ENCODE measurements at regions of chr6 and their contacts with region 1.

Region 1: DNA sequence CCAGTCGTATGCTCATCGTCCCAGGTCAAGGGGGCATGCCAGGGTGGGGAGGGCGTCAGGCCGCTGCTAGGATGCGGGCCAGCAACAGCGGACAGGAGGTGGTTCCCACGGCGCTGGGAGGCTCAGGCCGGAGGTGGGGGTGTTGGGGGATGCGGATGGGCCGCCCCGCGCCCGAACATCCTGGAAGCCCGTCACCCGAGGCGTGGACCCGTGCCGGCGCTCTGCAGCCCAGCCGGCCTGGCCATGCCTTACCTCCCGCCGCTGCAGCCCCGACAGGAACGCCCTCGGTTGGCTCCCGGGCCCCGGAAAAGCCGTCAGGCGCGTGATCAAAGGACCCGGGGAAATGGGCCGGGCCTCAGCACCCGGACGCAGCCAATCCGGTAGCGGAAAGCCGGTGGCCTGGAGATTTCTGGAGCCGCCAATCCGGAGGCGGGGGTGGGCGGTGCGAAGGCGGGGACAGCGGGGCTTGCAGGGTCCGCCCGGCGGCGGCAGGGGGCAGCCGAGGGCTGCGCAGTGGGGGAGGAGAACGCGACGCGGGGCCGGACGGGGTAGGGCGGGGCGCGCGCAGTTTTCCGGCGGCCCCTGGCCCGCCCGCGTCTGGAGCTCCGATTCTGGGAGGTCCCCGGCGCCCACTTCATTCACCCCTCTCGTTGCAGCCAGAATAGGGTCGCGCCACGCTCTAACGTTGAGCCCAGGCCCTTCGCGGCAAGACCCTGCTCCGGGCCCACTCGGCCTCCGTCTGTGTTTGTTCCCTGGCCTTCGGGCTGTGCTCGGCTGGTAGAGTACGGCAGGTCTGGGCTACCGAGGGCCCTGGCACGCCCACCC is at the start of gene SMIM29:
- DNase-seq: peak; percentile 99
- ATAC-seq: peak; percentile 83
- H3K4me3 Mint-ChIP-seq: peak within 1 kb of the TSS; percentile 76
- H3K27ac Mint-ChIP-seq: peak within 1 kb of the TSS; percentile 85
- H3K4me1 Mint-ChIP-seq: peaks cover 43% of the 10 kb centered on the region
- H3K27me3 Mint-ChIP-seq: no peaks in the 10 kb centered on the region
- total RNA-seq, gene SMIM29: 15.8 to 16.3 TPM

Region 2: GRCh38 chr6:34015586-34015985 is 233.4 kb before region 1 on chr6:
- CTCF ChIA-PET with region 1: no interaction called
- POLR2A ChIA-PET with region 1: no interaction called
- intact Hi-C with region 1: no loop called
- DNase-seq: no peak
- ATAC-seq: no peak
- H3K4me3 Mint-ChIP-seq: no peak overlapping the region
- H3K27ac Mint-ChIP-seq: no peak overlapping the region
- H3K4me1 Mint-ChIP-seq: no peaks in the 10 kb centered on the region
- H3K27me3 Mint-ChIP-seq: no peaks in the 10 kb centered on the region

Region 3: GRCh38 chr6:34161857-34162515 is 87.0 kb before region 1 on chr6:
- CTCF ChIA-PET with region 1: interaction called, 4 read pairs
- POLR2A ChIA-PET with region 1: no interaction called
- intact Hi-C with region 1: loop called in 1 of 2 experiments (anchors 2 kb)
- DNase-seq: no peak
- ATAC-seq: no peak
- H3K4me3 Mint-ChIP-seq: no peak overlapping the region
- H3K27ac Mint-ChIP-seq: no peak overlapping the region
- H3K4me1 Mint-ChIP-seq: no peaks in the 10 kb centered on the region
- H3K27me3 Mint-ChIP-seq: no peaks in the 10 kb centered on the region

Region 4: DNA sequence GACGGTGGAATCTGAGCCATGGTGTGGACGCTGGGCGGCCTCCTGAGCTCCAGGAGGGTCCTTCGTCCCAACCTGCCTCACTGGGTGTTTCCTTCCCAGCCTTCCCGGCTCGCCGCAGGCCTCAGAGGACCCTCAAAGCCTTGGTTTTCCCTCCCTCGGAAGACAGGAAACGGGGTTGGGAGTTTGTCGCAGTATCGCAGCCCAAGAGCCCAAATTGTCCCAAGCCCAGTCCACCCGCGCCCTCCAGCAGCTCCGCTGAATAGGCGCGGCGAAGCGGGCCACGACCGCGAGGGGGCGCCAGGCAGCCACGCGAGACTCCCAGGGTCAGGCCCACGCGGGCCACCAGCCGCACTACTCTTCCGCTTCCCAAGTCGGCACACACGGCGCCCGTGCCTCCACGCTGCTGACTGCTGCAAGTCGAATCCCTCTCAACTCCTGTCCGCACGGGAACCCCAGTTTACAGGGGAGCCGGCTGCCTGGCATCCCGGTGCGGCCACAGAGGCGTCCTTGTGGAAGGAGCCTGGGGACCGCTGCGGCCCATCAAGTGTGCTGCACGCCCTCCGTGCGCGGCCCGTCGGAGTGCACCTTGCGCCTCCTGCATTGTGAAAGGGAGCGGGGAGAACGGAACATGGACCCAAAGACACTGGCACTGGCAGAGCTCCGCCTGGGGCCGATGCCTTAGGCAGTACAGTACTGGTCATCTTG is 52.7 kb before region 1 on chr6:
- CTCF ChIA-PET with region 1: interaction called, 11 read pairs
- POLR2A ChIA-PET with region 1: no interaction called
- intact Hi-C with region 1: loop called (anchors 1 kb)
- DNase-seq: peak; percentile 93
- ATAC-seq: peak; percentile 94
- H3K4me3 Mint-ChIP-seq: peak overlapping the region; percentile 73
- H3K27ac Mint-ChIP-seq: peak overlapping the region; percentile 80
- H3K4me1 Mint-ChIP-seq: peaks cover 11% of the 10 kb centered on the region
- H3K27me3 Mint-ChIP-seq: no peaks in the 10 kb centered on the region

Region 5: GRCh38 chr6:34223956-34224940 is 24.7 kb before region 1 on chr6:
- CTCF ChIA-PET with region 1: interaction called, 4 read pairs
- POLR2A ChIA-PET with region 1: interaction called, 5 read pairs
- intact Hi-C with region 1: loop called in 1 of 2 experiments (anchors 1 kb)
- DNase-seq: peak; percentile 98
- ATAC-seq: peak; percentile 97
- H3K4me3 Mint-ChIP-seq: peak overlapping the region; percentile 52
- H3K27ac Mint-ChIP-seq: peak overlapping the region; percentile 88
- H3K4me1 Mint-ChIP-seq: peaks cover 44% of the 10 kb centered on the region
- H3K27me3 Mint-ChIP-seq: no peaks in the 10 kb centered on the region

Region 6: DNA sequence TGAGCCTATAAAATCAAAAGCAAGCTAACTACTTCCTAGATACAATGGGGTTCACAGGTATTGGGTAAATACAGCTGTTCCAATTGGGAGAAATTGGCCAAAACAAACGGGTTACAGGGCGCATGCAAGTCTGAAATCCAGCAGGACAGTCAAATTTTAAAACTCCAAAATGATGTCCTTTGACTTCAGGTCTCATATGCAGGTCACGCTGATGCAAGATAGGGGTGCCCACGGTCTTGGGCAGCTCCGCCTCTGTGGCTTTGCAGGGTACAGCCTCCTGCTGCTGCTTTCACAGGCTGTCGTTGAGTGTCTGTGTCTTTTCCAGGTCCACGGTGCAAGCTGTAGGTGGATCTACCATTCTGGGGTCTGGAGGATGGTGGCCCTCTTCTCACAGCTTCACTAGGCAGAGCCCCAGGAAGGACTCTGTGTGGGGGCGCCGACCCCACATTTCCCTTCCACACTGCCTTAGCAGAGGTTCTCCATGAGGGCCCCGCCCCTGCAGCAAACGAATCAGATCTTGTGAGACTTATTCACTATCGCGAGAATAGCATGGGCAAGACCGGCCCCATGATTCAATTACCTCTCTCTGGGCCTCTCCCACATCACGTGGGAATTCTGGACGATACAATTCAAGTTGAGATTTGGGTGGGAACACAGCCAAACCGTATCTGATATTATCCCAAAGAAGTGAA is 11.8 kb after region 1 on chr6:
- CTCF ChIA-PET with region 1: no interaction called
- POLR2A ChIA-PET with region 1: no interaction called
- intact Hi-C with region 1: no loop called
- DNase-seq: no peak
- ATAC-seq: no peak
- H3K4me3 Mint-ChIP-seq: no peak overlapping the region
- H3K27ac Mint-ChIP-seq: no peak overlapping the region
- H3K4me1 Mint-ChIP-seq: no peaks in the 10 kb centered on the region
- H3K27me3 Mint-ChIP-seq: no peaks in the 10 kb centered on the region

Region 7: GRCh38 chr6:34414999-34415858 is 166.3 kb after region 1 on chr6:
- CTCF ChIA-PET with region 1: interaction called, 34 read pairs
- POLR2A ChIA-PET with region 1: interaction called, 7 read pairs
- intact Hi-C with region 1: loop called (anchors 1 to 5 kb)
- DNase-seq: peak; percentile 48
- ATAC-seq: peak; percentile 57
- H3K4me3 Mint-ChIP-seq: no peak overlapping the region
- H3K27ac Mint-ChIP-seq: peak overlapping the region; percentile 51
- H3K4me1 Mint-ChIP-seq: peaks cover 15% of the 10 kb centered on the region
- H3K27me3 Mint-ChIP-seq: no peaks in the 10 kb centered on the region

Region 8: DNA sequence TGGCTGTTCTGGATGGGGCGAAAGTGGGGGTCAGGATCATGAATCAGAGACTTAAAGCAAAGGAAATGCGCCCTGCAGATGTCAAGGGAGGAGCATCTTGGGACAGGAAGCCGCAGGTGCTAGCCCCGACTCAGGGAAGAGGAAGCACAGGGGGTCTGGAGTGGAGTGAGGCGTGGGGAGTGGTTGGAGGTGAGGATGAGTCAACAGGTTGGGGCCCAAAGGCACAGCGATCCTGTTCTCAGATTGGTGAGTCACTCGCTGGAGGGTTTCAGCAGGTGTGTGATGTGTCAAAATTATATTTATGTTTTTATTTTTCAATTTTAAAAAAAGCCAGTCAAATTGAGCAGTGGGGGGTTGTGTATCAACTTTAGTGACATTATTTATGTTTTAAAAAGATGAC is 236.0 kb after region 1 on chr6:
- CTCF ChIA-PET with region 1: no interaction called
- POLR2A ChIA-PET with region 1: no interaction called
- intact Hi-C with region 1: loop called in 1 of 2 experiments (anchors 2 kb)
- DNase-seq: peak; percentile 90
- ATAC-seq: peak; percentile 98
- H3K4me3 Mint-ChIP-seq: peak overlapping the region; percentile 24
- H3K27ac Mint-ChIP-seq: peak overlapping the region; percentile 87
- H3K4me1 Mint-ChIP-seq: peaks cover 27% of the 10 kb centered on the region
- H3K27me3 Mint-ChIP-seq: no peaks in the 10 kb centered on the region

Region 9: GRCh38 chr6:34526992-34527728 is 278.2 kb after region 1 on chr6:
- CTCF ChIA-PET with region 1: no interaction called
- POLR2A ChIA-PET with region 1: no interaction called
- intact Hi-C with region 1: loop called in 1 of 2 experiments (anchors 1 kb)
- DNase-seq: peak; percentile 98
- ATAC-seq: peak; percentile 100
- H3K4me3 Mint-ChIP-seq: no peak overlapping the region
- H3K27ac Mint-ChIP-seq: no peak overlapping the region
- H3K4me1 Mint-ChIP-seq: peaks cover 3% of the 10 kb centered on the region
- H3K27me3 Mint-ChIP-seq: no peaks in the 10 kb centered on the region